Aorta (tissue), 5 donors: ENCODE measurements at regions of chr18 and their contacts with region 1.

Region 1: GRCh38 chr18:48445540-48445939 is 36.4 kb upstream of the ZBTB7C start:
- DNase-seq: peak; percentile 84 to 90
- ATAC-seq: peak; percentile 71
- H3K4me3 ChIP-seq: no peak overlapping the region
- H3K27ac ChIP-seq: no peak overlapping the region
- H3K4me1 ChIP-seq: no peaks in the 10 kb centered on the region
- H3K27me3 ChIP-seq: no peaks in the 10 kb centered on the region

Region 2: DNA sequence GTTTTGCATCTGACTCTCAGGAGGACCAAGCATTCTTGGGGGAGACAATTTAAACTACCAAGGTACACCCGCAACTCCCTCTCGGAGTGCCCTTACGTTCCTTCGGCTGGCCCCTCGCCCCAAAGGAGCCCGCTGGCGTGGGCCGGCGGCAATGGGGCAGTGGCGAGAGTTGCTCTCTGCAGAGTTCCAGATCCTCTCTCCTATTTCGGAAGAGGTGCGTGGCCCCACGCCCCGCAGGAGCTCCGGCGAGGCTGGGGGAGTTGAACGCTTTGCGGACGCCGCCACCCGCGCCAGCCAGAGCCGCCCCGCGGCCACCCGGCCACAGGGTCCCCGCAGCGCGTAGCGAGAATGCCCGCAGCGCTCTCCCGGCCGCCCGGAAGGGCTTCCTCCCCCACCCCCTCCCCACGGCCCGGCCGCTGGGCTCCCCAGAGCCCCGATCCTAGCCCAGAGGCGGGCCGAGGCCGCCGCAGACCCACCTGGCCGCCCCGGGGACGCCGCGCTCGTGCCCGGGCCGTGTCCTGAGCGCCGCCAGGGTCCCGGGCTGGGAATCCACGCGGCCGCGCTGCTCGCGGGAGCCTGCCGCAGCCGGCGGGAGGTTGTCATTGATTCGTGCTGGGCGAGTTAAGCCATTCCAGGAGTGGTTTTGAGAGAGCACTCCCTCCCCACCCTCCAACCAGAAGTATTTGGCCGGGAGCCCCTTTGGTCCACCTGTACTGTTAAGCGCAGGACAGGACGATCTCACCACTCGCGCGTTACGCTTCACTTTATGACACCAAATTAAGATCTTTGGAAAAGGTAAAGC is 308.8 kb before region 1 on chr18:
- intact Hi-C with region 1: loop called in 1 of 2 experiments (anchors 10 kb)
- DNase-seq: no peak
- ATAC-seq: peak; percentile 10
- H3K4me3 ChIP-seq: peak overlapping the region; percentile 56 to 57
- H3K27ac ChIP-seq: no peak overlapping the region
- H3K4me1 ChIP-seq: no peaks in the 10 kb centered on the region
- H3K27me3 ChIP-seq: no peaks in the 10 kb centered on the region

Region 3: DNA sequence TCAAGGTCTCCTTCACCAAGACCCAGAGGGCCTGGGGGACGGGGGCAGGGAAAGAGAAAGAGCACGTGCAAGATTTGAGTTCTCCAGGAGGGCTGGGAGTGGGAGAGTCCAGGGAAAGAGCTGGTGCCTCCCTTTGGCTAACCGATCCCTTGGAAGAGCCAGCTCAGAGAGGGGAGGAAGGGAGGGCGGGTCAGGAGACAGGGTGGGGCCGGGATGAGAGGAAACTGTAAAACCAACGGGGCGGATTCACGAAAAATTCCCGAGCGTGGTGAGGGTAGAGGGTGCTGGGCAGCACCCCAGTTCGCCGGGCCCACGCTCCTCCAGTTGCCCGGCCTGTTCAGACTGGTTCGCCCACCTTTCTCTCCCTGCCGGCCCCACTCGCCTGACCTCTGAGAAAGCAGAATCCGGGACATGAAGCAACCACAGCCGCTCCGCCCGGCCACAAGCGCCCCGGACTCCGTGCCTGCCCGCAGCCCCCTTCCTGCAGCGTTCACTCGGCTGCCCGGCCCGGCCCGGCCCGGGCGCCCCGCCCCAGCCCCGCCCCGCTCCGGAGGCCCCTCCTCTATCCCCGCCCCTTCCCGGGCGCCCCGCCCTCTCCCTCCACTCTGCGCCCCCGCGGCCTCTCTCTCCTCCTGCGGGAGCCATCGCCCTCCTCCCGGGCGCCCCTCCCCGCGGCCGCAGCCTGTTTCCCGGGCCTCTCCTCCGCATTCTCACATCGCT is 284.2 kb before region 1 on chr18:
- intact Hi-C with region 1: loop called in 1 of 2 experiments (anchors 10 kb)
- DNase-seq: peak; percentile 88 to 95
- ATAC-seq: peak; percentile 93
- H3K4me3 ChIP-seq: peak overlapping the region; percentile 50 to 57
- H3K27ac ChIP-seq: peak overlapping the region in 1 of 2 donors; percentile 80
- H3K4me1 ChIP-seq: no peaks in the 10 kb centered on the region
- H3K27me3 ChIP-seq: no peaks in the 10 kb centered on the region

Region 4: DNA sequence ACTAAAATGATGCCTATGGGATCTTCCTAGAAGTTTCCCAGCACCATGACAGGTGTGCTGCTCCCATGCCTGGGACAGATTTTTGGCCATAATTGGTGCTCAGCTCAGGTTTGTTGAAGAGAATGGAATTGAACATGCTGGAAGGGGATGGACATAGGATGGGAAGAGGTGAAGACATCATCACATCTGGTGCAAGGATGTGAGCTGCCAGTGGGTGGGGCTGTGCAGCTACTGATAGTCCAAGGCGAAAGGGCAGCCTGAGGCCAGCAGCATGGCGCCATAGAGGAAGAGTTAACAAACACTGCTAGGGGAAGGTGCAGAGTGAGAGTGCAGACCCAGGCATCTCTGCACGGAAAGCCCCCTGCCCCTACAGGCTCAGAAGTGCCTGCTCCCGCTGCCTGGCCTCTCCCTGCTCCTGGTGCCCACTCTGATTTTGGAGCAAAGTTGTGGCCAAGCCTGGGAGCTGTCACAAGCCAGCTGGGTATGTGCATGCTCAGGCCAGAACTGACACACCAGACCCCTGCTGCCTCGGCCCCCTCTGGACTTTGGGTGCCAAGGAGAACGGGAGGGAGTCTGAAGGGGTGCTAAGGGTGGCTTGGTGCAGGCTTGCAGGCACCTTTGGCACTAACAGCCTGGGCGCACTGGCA is 214.9 kb before region 1 on chr18:
- intact Hi-C with region 1: loop called in 1 of 2 experiments (anchors 5 kb)
- DNase-seq: peak; percentile 76 to 85
- ATAC-seq: peak; percentile 45
- H3K4me3 ChIP-seq: no peak overlapping the region
- H3K27ac ChIP-seq: no peak overlapping the region
- H3K4me1 ChIP-seq: no peaks in the 10 kb centered on the region
- H3K27me3 ChIP-seq: no peaks in the 10 kb centered on the region

Region 5: DNA sequence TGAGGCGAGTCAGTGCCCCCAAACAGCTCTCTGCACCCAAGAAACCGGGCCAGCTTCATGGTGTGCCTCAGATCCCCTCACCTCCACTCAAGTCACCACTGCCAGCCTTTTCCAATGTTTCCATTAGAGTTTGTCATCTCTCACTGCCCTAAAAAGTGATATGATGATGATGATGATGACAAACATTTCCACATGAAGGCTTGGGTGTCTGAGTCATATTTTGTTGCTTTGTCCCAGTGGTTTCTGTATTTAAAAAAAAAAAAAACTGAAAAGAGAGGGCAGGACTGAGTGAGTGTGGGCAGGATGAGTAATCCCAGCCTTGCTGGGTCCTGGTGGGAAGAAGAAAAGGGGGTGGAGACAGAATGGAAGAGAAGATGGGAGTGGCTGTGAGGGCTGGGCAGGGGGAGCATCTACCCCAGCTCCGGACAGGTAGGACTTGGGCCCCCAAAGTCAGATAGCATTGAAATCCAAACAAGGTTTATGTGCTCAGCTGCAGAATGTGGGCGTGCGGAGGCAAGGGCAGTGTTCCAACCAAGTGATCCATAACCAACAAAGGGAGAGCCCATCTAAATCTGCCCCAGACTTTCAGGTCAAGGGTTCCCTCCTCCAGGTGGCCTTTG is 115.0 kb before region 1 on chr18:
- intact Hi-C with region 1: loop called in 1 of 2 experiments (anchors 5 kb)
- DNase-seq: peak; percentile 55 to 73
- ATAC-seq: peak; percentile 35
- H3K4me3 ChIP-seq: no peak overlapping the region
- H3K27ac ChIP-seq: peak overlapping the region in 1 of 2 donors; percentile 68
- H3K4me1 ChIP-seq: peaks cover 0 to 11% of the 10 kb centered on the region in 2 donors
- H3K27me3 ChIP-seq: no peaks in the 10 kb centered on the region

Region 6: GRCh38 chr18:48345596-48345995 is 99.9 kb before region 1 on chr18:
- intact Hi-C with region 1: loop called in 1 of 2 experiments (anchors 5 kb)
- DNase-seq: no peak
- ATAC-seq: no peak
- H3K4me3 ChIP-seq: no peak overlapping the region
- H3K27ac ChIP-seq: no peak overlapping the region
- H3K4me1 ChIP-seq: no peaks in the 10 kb centered on the region
- H3K27me3 ChIP-seq: no peaks in the 10 kb centered on the region

Region 7: GRCh38 chr18:48410095-48410920 is 35.2 kb before region 1 on chr18:
- intact Hi-C with region 1: loop called (anchors 5 kb)
- DNase-seq: peak; percentile 95 to 98
- ATAC-seq: peak; percentile 97
- H3K4me3 ChIP-seq: peak overlapping the region; percentile 94 to 97
- H3K27ac ChIP-seq: peak overlapping the region; percentile 16 to 81
- H3K4me1 ChIP-seq: peaks cover 0 to 5% of the 10 kb centered on the region in 2 donors
- H3K27me3 ChIP-seq: no peaks in the 10 kb centered on the region